Psoas muscle (tissue), 8 donors: ENCODE measurements at regions of chrX and their contacts with region 1.

Region 1: GRCh38 chrX:130975947-130976346 is 72.9 kb upstream of the ENOX2 start:
- DNase-seq: no peak
- ATAC-seq: peak; percentile 74 to 83 (median 80)
- H3K4me3 ChIP-seq: no peak overlapping the region
- H3K27ac ChIP-seq: no peak overlapping the region
- H3K4me1 ChIP-seq: no peaks in the 10 kb centered on the region
- H3K27me3 ChIP-seq: no peaks in the 10 kb centered on the region
- CTCF ChIP-seq: peak; percentile 75

Region 2: DNA sequence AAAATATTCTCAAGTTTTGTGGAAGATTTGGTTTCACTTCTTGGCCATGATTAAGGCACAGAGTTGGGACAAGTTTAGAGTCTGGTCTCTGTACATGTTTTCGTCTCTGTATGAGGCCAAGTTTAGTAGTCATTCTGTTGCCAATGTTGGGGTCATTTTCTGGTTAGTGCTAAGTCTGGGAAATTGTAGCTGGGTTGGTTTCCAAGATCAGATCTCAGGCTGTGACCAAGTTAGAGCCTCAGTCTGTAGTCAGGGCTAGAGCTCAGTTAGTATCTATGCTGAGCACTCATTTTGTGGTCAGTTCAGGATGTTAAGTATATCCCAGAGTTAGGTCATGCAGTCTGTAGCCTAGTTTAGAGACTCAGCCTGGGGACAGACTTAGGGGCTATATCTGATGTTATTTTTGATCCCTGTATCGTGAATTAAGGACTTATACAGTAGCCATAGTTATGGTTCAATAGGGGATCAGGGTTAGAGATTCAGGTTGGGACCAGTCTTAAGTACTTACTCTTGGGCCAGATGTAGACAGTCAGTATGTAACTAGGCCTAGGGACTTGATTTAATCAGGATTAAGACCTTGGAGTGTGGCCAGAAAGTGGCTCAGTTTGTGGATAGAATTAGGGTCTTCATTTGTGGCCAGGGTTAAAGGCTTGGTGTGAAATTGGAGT is 66.3 kb before region 1 on chrX:
- intact Hi-C with region 1: no loop called
- DNase-seq: no peak
- ATAC-seq: peak in 1 of 4 donors; percentile 77
- H3K4me3 ChIP-seq: no peak overlapping the region
- H3K27ac ChIP-seq: peak overlapping the region; percentile 58
- H3K4me1 ChIP-seq: no peaks in the 10 kb centered on the region
- H3K27me3 ChIP-seq: peaks cover 0 to 9% (median 0%) of the 10 kb centered on the region in 3 donors
- CTCF ChIP-seq: no peak

Region 3: GRCh38 chrX:131277547-131278136 is 301.7 kb after region 1 on chrX:
- intact Hi-C with region 1: no loop called
- DNase-seq: no peak
- ATAC-seq: no peak
- H3K4me3 ChIP-seq: no peak overlapping the region
- H3K27ac ChIP-seq: no peak overlapping the region
- H3K4me1 ChIP-seq: no peaks in the 10 kb centered on the region
- H3K27me3 ChIP-seq: peaks cover 0 to 13% (median 0%) of the 10 kb centered on the region in 3 donors
- CTCF ChIP-seq: no peak

Region 4: GRCh38 chrX:131366407-131366806 is 390.5 kb after region 1 on chrX:
- intact Hi-C with region 1: loop called in 1 of 2 experiments (anchors 5 kb)
- DNase-seq: no peak
- ATAC-seq: no peak
- H3K4me3 ChIP-seq: no peak overlapping the region
- H3K27ac ChIP-seq: no peak overlapping the region
- H3K4me1 ChIP-seq: no peaks in the 10 kb centered on the region
- H3K27me3 ChIP-seq: peaks cover 0 to 22% (median 0%) of the 10 kb centered on the region in 3 donors
- CTCF ChIP-seq: peak; percentile 34